Keratinocyte (primary cell): ENCODE measurements at regions of chr7 and their contacts with region 1.

Region 1: GRCh38 chr7:35716038-35716803 is 21.3 kb upstream of the HERPUD2 start:
- DNase-seq: no peak
- H3K4me3 ChIP-seq: no peak overlapping the region
- H3K27ac ChIP-seq: no peak overlapping the region
- H3K4me1 ChIP-seq: no peaks in the 10 kb centered on the region
- H3K27me3 ChIP-seq: no peaks in the 10 kb centered on the region
- CTCF ChIP-seq: no peak

Region 2: DNA sequence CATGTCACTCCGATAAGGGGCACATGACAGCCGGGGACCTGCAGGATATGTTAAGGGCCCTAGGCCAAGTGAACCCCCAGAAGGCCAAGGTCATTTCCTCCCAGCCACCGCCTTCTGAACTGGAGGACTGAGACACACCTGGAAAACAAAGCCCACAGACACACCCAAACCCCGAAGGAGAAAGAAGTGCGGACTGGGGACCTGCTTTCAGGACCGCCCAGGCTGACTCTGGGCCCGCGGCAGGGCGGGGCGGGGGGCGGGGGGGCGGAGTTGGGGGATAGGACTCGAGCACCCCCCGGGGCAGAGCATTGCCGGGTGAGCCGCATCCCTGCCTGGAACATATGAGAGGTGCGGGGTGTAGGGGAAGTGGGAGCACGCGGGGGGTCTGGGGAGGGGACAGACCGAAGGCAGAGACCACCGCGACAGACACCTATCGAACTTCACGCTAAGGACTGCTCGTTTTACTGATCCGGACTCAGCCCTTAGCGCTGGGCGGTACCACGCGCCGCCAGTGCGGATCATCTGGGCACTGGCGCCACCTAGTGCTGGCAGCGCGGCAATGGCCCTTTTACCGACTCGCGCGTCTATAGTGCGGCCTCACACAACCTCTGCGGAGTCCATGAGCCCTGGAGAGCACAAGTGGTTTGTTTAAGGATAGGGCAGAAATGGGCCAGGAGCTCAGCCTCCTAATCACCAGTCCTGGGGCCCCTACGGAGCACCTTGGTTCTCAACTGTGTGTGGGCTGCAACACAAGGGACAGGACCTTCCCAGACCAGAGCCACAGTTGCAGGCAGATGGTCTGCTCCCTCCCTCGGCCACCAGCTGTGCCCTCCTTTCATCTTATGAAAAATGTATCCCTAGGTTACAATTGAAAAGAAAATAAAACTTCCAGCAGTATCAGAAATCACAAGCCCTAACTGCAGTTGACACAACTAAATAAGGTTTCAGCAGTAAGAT is 178.9 kb before region 1 on chr7:
- dilution Hi-C with region 1: no loop called
- DNase-seq: no peak
- H3K4me3 ChIP-seq: peak overlapping the region in 1 of 3 experiments; percentile 15
- H3K27ac ChIP-seq: no peak overlapping the region
- H3K4me1 ChIP-seq: no peaks in the 10 kb centered on the region
- H3K27me3 ChIP-seq: peaks cover 7% of the 10 kb centered on the region
- CTCF ChIP-seq: peak; percentile 91 to 99 (median 98)

Region 3: GRCh38 chr7:35613096-35613495 is 103.1 kb before region 1 on chr7:
- dilution Hi-C with region 1: no loop called
- DNase-seq: no peak
- H3K4me3 ChIP-seq: no peak overlapping the region
- H3K27ac ChIP-seq: no peak overlapping the region
- H3K4me1 ChIP-seq: no peaks in the 10 kb centered on the region
- H3K27me3 ChIP-seq: no peaks in the 10 kb centered on the region
- CTCF ChIP-seq: no peak

Region 4: DNA sequence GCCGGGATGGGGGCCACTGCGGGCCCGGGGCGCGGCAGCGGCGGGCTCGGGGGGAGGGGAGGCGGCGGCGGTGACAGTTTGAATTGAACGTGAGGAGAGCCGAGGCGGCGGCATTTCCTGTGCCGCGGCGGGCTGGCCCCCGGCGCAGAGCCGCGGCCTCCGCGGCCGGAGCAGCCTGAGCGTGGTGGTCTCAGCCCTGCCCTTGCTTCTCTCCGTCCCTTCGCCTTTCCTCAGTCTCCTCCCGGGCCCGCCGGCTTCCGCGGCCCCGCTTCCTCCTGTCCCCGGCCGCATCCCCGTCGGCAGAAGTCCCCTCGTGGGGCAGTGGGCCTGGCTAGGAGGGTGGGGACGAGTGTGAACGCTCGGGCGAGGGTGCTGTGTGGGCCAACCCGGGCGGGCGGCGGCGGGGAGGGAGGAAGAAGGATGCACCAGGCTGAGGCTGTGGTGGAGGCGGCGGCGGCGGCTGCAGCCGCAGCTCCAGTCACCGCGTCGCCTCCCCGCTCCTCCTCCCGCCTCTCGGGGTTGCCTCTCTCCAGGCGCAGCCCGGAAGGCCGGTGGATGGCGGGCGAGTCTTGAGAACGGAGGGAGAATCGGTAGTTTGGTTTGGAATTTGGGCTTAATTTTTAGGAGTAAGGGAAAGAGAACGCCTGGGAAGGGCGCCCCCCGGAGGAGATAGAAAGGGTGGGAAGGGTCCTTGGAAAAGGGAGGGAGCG is 85.3 kb after region 1 on chr7:
- dilution Hi-C with region 1: loop called (anchors 25 kb)
- DNase-seq: no peak
- H3K4me3 ChIP-seq: peak overlapping the region; percentile 84 to 88 (median 85)
- H3K27ac ChIP-seq: peak overlapping the region; percentile 95
- H3K4me1 ChIP-seq: peaks cover 11% of the 10 kb centered on the region
- H3K27me3 ChIP-seq: no peaks in the 10 kb centered on the region
- CTCF ChIP-seq: peak; percentile 40 to 45 (median 44)